H1 (cell line): ENCODE measurements at regions of chr10 and their contacts with region 1.

Region 1: GRCh38 chr10:48896756-48897437 is 42.7 kb downstream of the LRRC18 start:
- DNase-seq: peak in 1 of 2 experiments; percentile 26
- H3K4me3 ChIP-seq: no peak overlapping the region
- H3K27ac ChIP-seq: no peak overlapping the region
- H3K4me1 ChIP-seq: no peaks in the 10 kb centered on the region
- H3K27me3 ChIP-seq: no peaks in the 10 kb centered on the region; a peak in 1 of 7 replicates
- CTCF ChIP-seq: no peak
- EP300 ChIP-seq: no peak
- POLR2A ChIP-seq: no peak
- RAD21 ChIP-seq: no peak

Region 2: GRCh38 chr10:48885383-48885782 is 11.5 kb before region 1 on chr10:
- CTCF ChIA-PET with region 1: interaction called, 14 read pairs
- POLR2A ChIA-PET with region 1: no interaction called
- DNase-seq: peak in 1 of 2 experiments; percentile 35
- H3K4me3 ChIP-seq: no peak overlapping the region
- H3K27ac ChIP-seq: no peak overlapping the region
- H3K4me1 ChIP-seq: no peaks in the 10 kb centered on the region
- H3K27me3 ChIP-seq: no peaks in the 10 kb centered on the region
- CTCF ChIP-seq: peak; percentile 38 to 67 (median 64); a peak in 3 of 4 replicates
- EP300 ChIP-seq: no peak
- POLR2A ChIP-seq: no peak
- RAD21 ChIP-seq: peak; percentile 67 to 74